A673 (cell line): ENCODE measurements at regions of chr17 and their contacts with region 1.

Region 1: DNA sequence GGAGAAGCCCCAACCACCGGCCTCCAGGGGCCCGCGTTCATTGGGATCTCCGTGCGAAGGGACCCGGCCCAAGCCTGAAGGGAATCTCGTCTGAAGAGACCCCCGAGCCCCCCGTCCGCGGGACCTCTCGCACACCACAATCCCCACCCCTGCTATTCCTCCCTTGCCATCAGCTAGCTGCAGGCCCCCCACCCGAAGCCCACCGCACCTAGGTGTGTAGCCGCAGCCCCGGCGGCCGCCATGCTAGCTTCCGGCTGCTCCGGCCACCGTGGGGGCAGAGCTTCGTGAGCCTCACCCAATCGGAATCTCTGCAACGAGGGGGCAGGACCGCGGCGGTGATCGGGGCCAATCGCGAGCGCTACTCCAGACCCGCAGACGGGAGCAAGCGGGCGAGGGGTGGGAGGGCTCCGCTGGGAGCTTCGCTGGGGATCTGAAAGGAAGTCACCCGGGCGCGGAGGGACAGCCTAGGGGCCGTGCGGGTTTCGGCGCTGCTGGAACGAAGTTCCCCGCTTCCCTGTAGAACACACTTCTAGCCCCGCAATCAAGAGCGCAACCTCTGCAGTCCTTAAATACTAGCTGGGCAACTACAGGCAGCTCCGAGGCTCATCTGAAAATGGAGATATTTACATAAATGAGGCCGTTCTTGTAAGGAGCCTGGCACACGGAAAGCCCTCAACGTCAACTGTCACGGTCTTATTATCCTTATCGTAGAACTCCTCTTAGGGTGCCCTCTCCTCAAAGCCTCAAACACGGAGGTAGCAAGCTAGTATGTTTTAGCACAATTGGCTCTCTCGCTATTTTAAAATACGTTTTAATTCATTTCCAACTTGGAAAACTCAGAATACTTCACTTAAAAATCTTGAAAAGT is at the start of gene PIGS:
- DNase-seq: peak; percentile 97
- H3K4me3 ChIP-seq: peak within 1 kb of the TSS; percentile 81
- H3K27ac ChIP-seq: peak within 1 kb of the TSS; percentile 65
- H3K4me1 ChIP-seq: peaks cover 15% of the 10 kb centered on the region
- H3K27me3 ChIP-seq: no peaks in the 10 kb centered on the region
- CTCF ChIP-seq: no peak
- total RNA-seq, gene PIGS: 51.6 and 64.8 TPM in 2 replicates

Region 2: GRCh38 chr17:27879987-27880608 is 691.4 kb before region 1 on chr17:
- CTCF ChIA-PET with region 1: no interaction called
- POLR2A ChIA-PET with region 1: no interaction called
- intact Hi-C with region 1: no loop called
- DNase-seq: peak; percentile 71
- H3K4me3 ChIP-seq: no peak overlapping the region
- H3K27ac ChIP-seq: no peak overlapping the region
- H3K4me1 ChIP-seq: no peaks in the 10 kb centered on the region
- H3K27me3 ChIP-seq: no peaks in the 10 kb centered on the region
- CTCF ChIP-seq: peak; percentile 79

Region 3: DNA sequence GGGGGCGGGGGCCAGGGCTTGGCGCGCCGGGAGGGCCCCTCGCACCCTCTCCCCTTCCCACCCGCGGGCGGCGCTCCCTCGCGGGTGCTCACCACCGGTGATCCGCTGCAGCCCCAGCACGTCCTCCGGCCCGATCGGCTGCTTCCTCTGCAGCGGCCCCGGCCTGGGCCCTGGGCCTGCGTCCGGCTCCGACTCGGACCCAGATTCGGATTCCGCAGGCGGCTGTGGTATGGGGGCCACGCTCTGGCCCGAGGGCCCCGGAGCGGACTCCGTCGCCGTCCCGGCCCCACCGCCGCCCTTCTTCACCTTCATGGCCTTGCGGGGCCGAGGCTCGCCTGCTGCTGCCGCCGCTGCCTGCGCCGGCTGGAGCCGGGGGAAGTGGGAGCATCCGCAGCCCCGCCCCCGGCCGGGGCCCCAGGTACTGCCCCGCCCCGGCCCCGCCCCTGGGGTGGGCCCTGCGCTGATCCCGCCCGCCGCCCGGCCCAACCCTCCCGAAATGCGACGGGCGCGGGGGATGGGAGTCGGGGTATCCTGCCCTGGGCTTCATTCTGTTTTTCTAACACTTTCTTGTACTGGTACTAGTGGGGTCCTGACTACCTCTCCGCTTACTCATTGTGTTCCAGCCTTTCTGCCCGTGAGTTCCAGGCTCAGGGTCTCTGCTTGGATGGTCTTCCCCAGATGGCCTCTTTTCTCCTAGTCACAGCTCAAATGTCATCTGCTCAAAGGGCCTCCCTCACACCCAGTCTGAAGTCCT is 19.1 kb before region 1 on chr17 and contains the start of gene UNC119:
- CTCF ChIA-PET with region 1: no interaction called
- POLR2A ChIA-PET with region 1: no interaction called
- intact Hi-C with region 1: loop called (anchors 2 kb)
- DNase-seq: peak; percentile 86
- H3K4me3 ChIP-seq: peak within 1 kb of the TSS; percentile 97
- H3K27ac ChIP-seq: peak within 1 kb of the TSS; percentile 78
- H3K4me1 ChIP-seq: peaks cover 29% of the 10 kb centered on the region
- H3K27me3 ChIP-seq: no peaks in the 10 kb centered on the region
- CTCF ChIP-seq: no peak
- total RNA-seq, gene UNC119: 44.6 and 46.8 TPM in 2 replicates

Region 4: DNA sequence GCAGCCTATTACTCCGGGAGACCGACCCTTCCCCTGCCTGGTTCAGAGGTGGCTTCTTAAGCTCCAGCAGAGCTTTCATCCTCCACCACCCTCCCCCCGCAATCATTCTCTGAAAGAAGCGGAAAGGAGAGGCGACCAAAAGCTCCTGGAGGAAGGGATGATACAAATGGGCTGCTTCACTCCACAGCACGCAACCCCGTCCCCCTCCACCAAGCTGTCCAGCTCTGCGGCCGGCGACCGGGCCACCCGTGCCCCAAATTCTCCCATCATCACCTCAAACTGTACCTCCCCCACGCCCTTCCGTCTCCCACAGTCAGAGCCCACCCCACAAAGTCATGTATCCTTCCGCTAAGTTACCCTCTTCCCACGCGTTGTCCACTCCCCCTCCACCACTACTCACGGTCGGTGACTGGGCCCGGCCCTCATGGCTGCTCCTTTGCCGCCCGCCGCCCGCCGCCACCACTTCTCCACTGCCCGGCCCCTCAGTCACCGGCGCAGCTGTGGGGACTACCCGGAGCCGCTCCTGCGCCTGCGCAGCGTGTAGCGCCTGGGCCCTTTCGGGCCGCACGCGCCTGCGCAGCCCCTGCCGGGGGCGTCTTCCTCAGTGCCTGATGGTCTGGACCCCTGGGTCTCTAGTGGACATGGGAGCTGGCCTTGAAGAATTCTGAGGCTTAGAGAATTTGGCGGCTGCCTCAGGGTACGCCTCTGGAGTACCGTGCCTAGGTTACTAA is 271.0 kb after region 1 on chr17 and contains the start of gene FAM222B:
- CTCF ChIA-PET with region 1: no interaction called
- POLR2A ChIA-PET with region 1: interaction called, 11 read pairs
- intact Hi-C with region 1: no loop called
- DNase-seq: peak; percentile 95
- H3K4me3 ChIP-seq: peak within 1 kb of the TSS; percentile 87
- H3K27ac ChIP-seq: peak within 1 kb of the TSS; percentile 74
- H3K4me1 ChIP-seq: peaks cover 11% of the 10 kb centered on the region
- H3K27me3 ChIP-seq: no peaks in the 10 kb centered on the region
- CTCF ChIP-seq: no peak
- total RNA-seq, gene FAM222B: 27.3 and 31.8 TPM in 2 replicates